K562 (cell line): ENCODE measurements at regions of chr15 and their contacts with region 1.

Region 1: DNA sequence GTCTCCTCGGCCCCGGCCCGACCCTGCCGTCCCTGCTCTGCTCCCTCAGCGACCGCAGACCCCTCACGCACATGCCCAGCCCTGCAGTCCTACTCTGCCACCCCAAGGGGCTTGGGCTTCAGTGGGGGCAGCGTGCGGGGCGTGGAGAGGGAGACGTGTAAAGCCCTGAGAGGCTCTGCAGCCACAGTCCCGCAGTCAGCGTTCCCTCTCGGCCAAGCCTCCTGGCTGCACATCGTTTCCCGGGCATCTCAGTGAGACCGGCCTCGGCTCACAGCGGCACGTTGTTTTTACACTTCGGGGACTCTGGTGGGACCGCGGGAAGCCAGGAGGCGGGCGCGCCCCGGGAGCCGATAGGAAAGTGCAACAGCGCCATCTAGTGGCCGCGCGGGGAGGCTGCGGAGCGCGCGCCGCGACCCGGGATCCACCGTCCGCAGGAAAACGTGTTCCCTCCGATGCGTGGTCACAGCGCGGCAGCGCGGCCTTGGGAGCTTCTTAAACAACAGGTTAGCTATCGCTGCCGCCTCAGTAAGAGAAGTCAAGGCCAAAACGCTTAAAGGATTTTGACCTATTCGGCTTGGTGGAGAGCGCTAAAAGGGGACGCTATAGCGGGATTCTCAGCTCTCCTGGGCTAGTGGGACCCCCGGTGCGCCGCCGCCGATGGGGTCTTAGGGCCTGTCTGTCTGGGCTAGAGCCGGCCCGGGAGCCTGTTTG is 226.8 kb upstream of the IGF1R start:
- DNase-seq: peak; percentile 61 to 90 (median 84)
- ATAC-seq: peak; percentile 97
- H3K4me3 ChIP-seq: no peak overlapping the region
- H3K27ac ChIP-seq: no peak overlapping the region
- H3K4me1 ChIP-seq: peaks cover 0 to 11% of the 10 kb centered on the region in 2 experiments; a peak in 1 of 5 replicates
- H3K27me3 ChIP-seq: peaks cover 4 to 41% of the 10 kb centered on the region in 2 experiments; a peak in 4 of 5 replicates
- CTCF ChIP-seq: peak; percentile 85 to 91 (median 88)
- EP300 ChIP-seq: no peak
- POLR2A ChIP-seq: no peak
- RAD21 ChIP-seq: peak; percentile 57 to 80

Region 2: GRCh38 chr15:98292442-98293240 is 128.9 kb before region 1 on chr15:
- CTCF ChIA-PET with region 1: no interaction called
- POLR2A ChIA-PET with region 1: no interaction called
- in situ Hi-C with region 1: no loop called
- intact Hi-C with region 1: loop called (anchors 5 kb)
- DNase-seq: peak; percentile 61 to 83 (median 76)
- ATAC-seq: peak; percentile 99
- H3K4me3 ChIP-seq: no peak overlapping the region
- H3K27ac ChIP-seq: no peak overlapping the region
- H3K4me1 ChIP-seq: peaks cover 0 to 5% of the 10 kb centered on the region in 2 experiments; a peak in 1 of 5 replicates
- H3K27me3 ChIP-seq: peaks cover 11 to 25% of the 10 kb centered on the region in 2 experiments; a peak in 3 of 5 replicates
- CTCF ChIP-seq: peak; percentile 68 to 84 (median 81)
- EP300 ChIP-seq: no peak
- POLR2A ChIP-seq: no peak
- RAD21 ChIP-seq: peak in 1 of 2 experiments; percentile 29; a peak in 1 of 4 replicates